Lower leg skin (tissue), 4 donors: ENCODE measurements at regions of chr5 and their contacts with region 1.

Region 1: GRCh38 chr5:141883184-141883891 is 5.1 kb upstream of the PCDH1 start:
- DNase-seq: peak in 1 of 2 donors; percentile 81
- H3K4me3 ChIP-seq: no peak overlapping the region
- CTCF ChIP-seq: no peak
- POLR2A ChIP-seq: no peak

Region 2: DNA sequence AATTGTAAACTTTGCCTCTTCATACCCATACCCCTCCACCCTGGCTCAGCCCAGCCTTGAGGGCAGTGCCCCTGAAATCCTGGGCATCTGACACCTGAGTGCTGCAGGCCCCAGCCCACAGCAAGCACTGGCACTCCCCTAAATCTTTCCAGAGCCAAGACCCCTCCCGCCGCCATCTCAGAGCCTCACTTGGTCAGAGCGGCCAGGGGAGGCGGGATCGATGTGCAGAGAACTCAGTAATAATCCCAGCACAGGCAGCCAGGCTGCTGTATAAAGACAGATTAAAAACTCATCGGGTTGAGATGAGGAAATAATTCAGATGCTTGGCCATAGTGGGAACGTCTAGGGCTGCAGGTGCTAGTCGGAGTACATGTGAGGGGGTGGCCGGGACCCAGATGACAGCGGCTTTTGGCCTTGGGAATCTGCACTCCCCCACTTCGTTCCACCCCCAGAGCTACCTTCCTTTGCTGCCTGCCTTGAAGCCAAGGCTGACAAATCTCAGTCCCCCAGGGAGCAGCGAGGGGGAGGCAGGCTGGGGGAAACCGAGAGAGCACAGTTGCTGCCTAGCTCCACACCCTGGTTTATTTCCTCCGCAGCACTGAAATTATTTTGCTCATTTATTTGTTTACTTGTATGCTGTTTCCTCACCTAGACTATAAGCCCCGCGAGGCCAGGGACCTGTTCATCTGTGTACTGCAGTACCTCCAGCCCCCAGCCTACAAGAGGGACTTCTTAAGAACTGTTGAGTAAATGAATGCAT is 181.8 kb before region 1 on chr5:
- intact Hi-C with region 1: loop called (anchors 5 kb)
- DNase-seq: no peak
- H3K4me3 ChIP-seq: no peak overlapping the region
- CTCF ChIP-seq: no peak
- POLR2A ChIP-seq: no peak

Region 3: DNA sequence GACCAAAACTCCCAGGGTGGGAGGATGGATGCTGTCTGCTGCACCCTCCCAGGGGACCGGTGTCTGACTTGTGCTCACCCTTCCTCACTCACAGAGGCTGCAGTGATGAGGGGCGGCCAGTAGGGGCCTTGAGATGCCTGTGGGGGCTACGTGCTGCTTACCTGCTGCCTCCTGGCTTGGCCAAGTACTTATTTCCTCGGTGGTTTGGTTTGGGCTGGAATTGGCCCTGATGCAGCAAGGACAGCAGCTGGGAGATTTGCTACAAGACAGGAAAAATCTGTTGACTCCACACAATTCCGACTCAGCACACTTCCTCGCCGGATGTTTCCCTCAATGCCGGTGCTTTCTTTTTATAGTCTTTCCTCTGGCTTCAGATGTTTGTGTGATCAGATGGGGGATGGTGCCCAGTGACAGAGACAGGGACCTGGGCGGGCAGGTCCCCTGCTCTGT is 68.0 kb after region 1 on chr5:
- intact Hi-C with region 1: loop called (anchors 10 kb)
- DNase-seq: peak in 1 of 2 donors; percentile 74
- H3K4me3 ChIP-seq: no peak overlapping the region
- CTCF ChIP-seq: no peak
- POLR2A ChIP-seq: no peak

Region 4: GRCh38 chr5:142548739-142549275 is 665.5 kb after region 1 on chr5:
- intact Hi-C with region 1: no loop called
- DNase-seq: peak in 1 of 2 donors; percentile 48
- H3K4me3 ChIP-seq: no peak overlapping the region
- CTCF ChIP-seq: no peak
- POLR2A ChIP-seq: no peak